Activated naive CD4-positive, alpha-beta T cell treated with anti-CD3 and anti-CD28 coated beads for 36 hours (primary cell): ENCODE measurements at regions of chr18 and their contacts with region 1.

Region 1: DNA sequence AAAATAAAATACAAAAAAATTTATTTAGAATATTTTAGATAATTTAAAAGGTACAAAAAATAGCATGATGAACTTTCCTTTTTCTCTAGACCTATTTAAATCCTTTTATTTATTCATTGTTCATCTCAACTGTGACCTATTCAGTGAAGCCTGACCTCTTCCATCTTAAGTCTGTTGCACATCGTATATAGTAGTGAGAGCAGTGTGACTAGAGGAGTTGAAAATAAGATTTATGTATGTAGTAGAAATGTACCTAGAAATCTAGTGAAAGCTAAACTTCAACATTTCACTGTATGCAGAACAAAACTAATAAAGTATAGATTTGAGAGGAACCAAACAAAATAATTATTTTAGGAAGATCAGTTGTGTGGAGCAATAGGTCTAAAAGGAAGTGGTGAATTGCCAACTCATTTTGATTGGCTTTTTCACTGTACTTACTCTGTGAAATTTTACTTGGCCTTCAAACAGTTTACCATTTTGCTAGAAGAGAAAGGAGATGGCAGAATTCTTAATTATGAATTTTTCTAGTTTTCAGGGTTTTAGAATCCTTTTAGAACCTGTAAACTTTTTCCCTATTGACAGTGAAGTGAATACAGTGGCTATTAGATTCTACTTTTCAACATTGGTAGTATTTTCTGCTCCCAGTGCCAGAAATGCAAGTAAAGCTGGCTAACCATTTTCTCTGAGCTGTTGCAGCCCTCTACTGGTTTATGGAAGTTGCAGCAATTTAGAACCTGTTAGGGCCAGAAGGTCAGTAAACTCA is 11.0 kb downstream of the ANKRD12 start:
- DNase-seq: peak; percentile 42
- H3K4me3 Mint-ChIP-seq: no peak overlapping the region
- H3K27ac Mint-ChIP-seq: peak overlapping the region; percentile 76
- H3K4me1 Mint-ChIP-seq: peaks cover 73% of the 10 kb centered on the region
- H3K27me3 Mint-ChIP-seq: no peaks in the 10 kb centered on the region

Region 2: DNA sequence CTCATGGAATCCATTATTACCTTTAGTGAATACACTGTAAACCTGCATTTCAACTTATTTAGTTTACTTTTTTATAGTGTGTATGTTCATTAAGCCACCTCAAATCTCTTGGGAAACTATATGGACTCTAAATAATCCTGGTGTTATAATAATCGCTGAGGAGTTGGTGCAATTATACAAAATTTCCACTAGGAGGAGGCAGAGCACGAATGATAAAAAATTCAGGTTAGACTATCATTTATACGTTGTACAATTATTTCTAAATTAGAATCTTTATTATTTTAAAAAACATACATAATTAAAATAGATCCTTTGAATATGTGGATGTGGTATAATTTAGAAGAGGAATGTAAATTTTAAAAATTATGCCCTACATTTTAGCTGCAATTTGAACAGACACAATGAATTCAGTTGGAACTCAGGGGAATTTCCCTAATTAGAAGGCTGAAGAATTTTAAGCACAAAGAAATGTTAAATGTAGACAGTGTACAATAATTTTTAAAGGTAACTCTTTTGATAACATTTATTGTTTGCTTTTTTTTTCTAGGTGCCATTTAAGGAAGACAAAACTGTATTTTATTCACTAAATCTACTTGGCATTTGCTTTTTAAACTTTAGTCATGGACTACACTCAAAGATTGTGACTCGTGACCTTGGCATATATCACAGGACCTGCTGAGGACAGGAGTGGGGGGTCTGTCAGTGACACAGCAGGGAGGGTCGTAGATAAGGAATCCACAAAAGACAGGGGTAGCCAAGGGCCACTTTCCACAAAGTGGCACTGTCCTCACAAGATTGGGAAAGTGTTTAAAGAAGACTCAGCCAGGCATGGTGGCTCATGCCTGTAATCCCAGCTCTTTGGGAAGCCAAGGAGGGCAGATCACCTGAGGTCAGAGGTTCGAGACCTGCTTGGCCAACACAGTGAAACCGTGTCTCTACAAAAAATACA is 492.8 kb before region 1 on chr18:
- CTCF ChIA-PET with region 1: no interaction called
- intact Hi-C with region 1: loop called (anchors 2 kb)
- DNase-seq: no peak
- H3K4me3 Mint-ChIP-seq: no peak overlapping the region
- H3K27ac Mint-ChIP-seq: no peak overlapping the region
- H3K4me1 Mint-ChIP-seq: no peaks in the 10 kb centered on the region
- H3K27me3 Mint-ChIP-seq: peaks cover 7% of the 10 kb centered on the region

Region 3: DNA sequence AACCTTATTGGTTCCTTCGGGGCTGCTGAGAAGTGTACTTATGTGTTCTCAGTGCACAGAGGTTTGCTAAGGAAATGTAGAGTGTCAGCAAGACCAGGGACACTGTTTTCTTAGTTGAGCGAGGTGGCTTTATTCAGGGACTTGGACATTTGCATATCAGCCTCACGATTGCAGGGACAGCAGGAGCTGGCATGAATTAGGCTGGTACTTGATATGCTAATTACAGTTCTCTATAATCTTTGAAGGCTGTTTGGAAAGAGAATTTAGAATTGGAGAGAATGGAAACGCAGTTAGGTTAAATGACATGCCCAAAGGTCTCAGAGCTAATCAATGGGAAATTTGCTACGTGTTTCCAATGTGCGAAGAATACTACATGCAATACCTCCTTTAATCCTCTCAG is 461.0 kb before region 1 on chr18:
- CTCF ChIA-PET with region 1: no interaction called
- intact Hi-C with region 1: no loop called
- DNase-seq: no peak
- H3K4me3 Mint-ChIP-seq: no peak overlapping the region
- H3K27ac Mint-ChIP-seq: no peak overlapping the region
- H3K4me1 Mint-ChIP-seq: no peaks in the 10 kb centered on the region
- H3K27me3 Mint-ChIP-seq: no peaks in the 10 kb centered on the region

Region 4: GRCh38 chr18:9017170-9017904 is 130.3 kb before region 1 on chr18:
- CTCF ChIA-PET with region 1: interaction called, 3 read pairs
- intact Hi-C with region 1: loop called (anchors 5 kb)
- DNase-seq: peak; percentile 84
- H3K4me3 Mint-ChIP-seq: peak overlapping the region; percentile 56
- H3K27ac Mint-ChIP-seq: no peak overlapping the region
- H3K4me1 Mint-ChIP-seq: peaks cover 14% of the 10 kb centered on the region
- H3K27me3 Mint-ChIP-seq: peaks cover 8% of the 10 kb centered on the region

Region 5: GRCh38 chr18:9082711-9083510 is 64.7 kb before region 1 on chr18:
- CTCF ChIA-PET with region 1: interaction called, 5 read pairs
- intact Hi-C with region 1: loop called (anchors 1 kb)
- DNase-seq: peak; percentile 82
- H3K4me3 Mint-ChIP-seq: peak overlapping the region; percentile 67
- H3K27ac Mint-ChIP-seq: peak overlapping the region; percentile 92
- H3K4me1 Mint-ChIP-seq: peaks cover 30% of the 10 kb centered on the region
- H3K27me3 Mint-ChIP-seq: no peaks in the 10 kb centered on the region

Region 6: GRCh38 chr18:9102508-9103375 is 44.9 kb before region 1 on chr18 and contains the start of gene NDUFV2:
- CTCF ChIA-PET with region 1: interaction called, 13 read pairs
- intact Hi-C with region 1: loop called (anchors 1 kb)
- DNase-seq: peak; percentile 98
- H3K4me3 Mint-ChIP-seq: peak within 1 kb of the TSS; percentile 81
- H3K27ac Mint-ChIP-seq: peak within 1 kb of the TSS; percentile 95
- H3K4me1 Mint-ChIP-seq: peaks cover 43% of the 10 kb centered on the region
- H3K27me3 Mint-ChIP-seq: no peaks in the 10 kb centered on the region
- total RNA-seq, gene NDUFV2: 290 to 303 TPM

Region 7: DNA sequence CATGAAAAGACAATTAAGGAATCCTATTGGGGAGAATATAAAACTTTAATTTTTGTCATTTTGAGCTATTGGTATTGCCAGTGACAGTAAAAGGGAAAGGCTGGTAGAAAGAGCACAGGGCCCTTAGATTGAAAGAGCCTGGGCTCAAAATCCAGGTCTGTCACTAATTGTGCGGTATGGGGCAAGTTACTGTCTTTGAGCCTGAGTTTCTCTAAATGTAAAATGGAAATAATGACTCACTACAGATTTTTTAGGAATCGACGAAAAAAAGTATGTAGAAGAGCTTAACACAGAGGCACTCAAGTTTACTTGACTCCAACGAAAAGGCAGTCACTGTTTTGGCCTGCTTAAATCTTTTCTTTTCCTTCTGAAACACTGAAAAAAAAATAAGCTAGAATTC is 38.1 kb before region 1 on chr18:
- CTCF ChIA-PET with region 1: interaction called, 13 read pairs
- intact Hi-C with region 1: loop called (anchors 1 kb)
- DNase-seq: no peak
- H3K4me3 Mint-ChIP-seq: peak overlapping the region; percentile 59
- H3K27ac Mint-ChIP-seq: peak overlapping the region; percentile 94
- H3K4me1 Mint-ChIP-seq: peaks cover 91% of the 10 kb centered on the region
- H3K27me3 Mint-ChIP-seq: no peaks in the 10 kb centered on the region

Region 8: GRCh38 chr18:9404565-9405060 is 257.0 kb after region 1 on chr18:
- CTCF ChIA-PET with region 1: no interaction called
- intact Hi-C with region 1: loop called (anchors 10 kb)
- DNase-seq: peak; percentile 68
- H3K4me3 Mint-ChIP-seq: peak overlapping the region; percentile 70
- H3K27ac Mint-ChIP-seq: peak overlapping the region; percentile 57
- H3K4me1 Mint-ChIP-seq: peaks cover 10% of the 10 kb centered on the region
- H3K27me3 Mint-ChIP-seq: no peaks in the 10 kb centered on the region